ENCODE measurements at regions of chr13 and their contacts with region 1.

Region 1: GRCh38 chr13:29542381-29542780 is 53.1 kb downstream of the SLC7A1 start:
- DNase-seq: no peak
- ATAC-seq: no peak
- H3K4me3 ChIP-seq: no peak overlapping the region
- H3K27ac ChIP-seq: no peak overlapping the region
- H3K4me1 ChIP-seq: peaks cover 0 to 39% (median 14%) of the 10 kb centered on the region in 9 donors
- H3K27me3 ChIP-seq: no peaks in the 10 kb centered on the region
- CTCF ChIP-seq: no peak

Region 2: DNA sequence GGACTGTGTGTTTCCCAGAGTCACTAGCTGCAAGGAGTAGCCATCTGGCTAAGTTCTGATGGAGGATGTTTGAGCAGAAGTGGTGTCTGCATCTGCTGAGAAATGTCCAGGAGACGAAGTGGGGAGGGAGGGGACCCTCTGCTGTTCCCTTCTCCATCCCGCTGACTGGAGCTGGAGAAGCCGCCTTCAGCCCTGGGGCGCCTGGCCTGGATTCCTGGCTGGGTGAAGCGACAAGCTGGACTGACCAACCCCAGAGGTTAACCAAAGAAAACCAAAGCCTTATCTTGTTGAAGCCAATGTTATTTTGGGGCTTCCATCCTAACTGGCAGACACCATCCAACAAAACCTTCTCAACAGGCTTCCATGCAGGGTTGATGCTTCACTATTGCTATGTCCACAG is 14.5 kb before region 1 on chr13:
- intact Hi-C with region 1: loop called in 1 of 10 experiments (anchors 1 kb)
- DNase-seq: no peak
- ATAC-seq: no peak
- H3K4me3 ChIP-seq: no peak overlapping the region
- H3K27ac ChIP-seq: no peak overlapping the region
- H3K4me1 ChIP-seq: peaks cover 0 to 20% (median 4%) of the 10 kb centered on the region in 9 donors
- H3K27me3 ChIP-seq: no peaks in the 10 kb centered on the region
- CTCF ChIP-seq: no peak

Region 3: GRCh38 chr13:29923554-29924481 is 381.4 kb after region 1 on chr13:
- intact Hi-C with region 1: no loop called
- DNase-seq: peak; percentile 34 to 42
- ATAC-seq: peak; percentile 52 to 85 (median 80)
- H3K4me3 ChIP-seq: no peak overlapping the region
- H3K27ac ChIP-seq: peak overlapping the region in 9 of 10 donors; percentile 9 to 72 (median 34)
- H3K4me1 ChIP-seq: peaks cover 12 to 38% (median 26%) of the 10 kb centered on the region in 9 donors
- H3K27me3 ChIP-seq: no peaks in the 10 kb centered on the region
- CTCF ChIP-seq: peak; percentile 40 to 87 (median 75)

Measured in heart right ventricle (tissue), 16 donors.